Posterior vena cava (tissue), 2 donors: ENCODE measurements at regions of chr20 and their contacts with region 1.

Region 1: GRCh38 chr20:61135968-61136367 is 116.1 kb upstream of the CDH4 start:
- DNase-seq: no peak

Region 2: GRCh38 chr20:60210779-60211617 is 925.0 kb before region 1 on chr20:
- intact Hi-C with region 1: loop called in 1 of 2 experiments (anchors 10 kb)
- DNase-seq: peak; percentile 90

Region 3: GRCh38 chr20:60845146-60845545 is 290.8 kb before region 1 on chr20:
- intact Hi-C with region 1: loop called in 1 of 2 experiments (anchors 10 kb)
- DNase-seq: no peak

Region 4: DNA sequence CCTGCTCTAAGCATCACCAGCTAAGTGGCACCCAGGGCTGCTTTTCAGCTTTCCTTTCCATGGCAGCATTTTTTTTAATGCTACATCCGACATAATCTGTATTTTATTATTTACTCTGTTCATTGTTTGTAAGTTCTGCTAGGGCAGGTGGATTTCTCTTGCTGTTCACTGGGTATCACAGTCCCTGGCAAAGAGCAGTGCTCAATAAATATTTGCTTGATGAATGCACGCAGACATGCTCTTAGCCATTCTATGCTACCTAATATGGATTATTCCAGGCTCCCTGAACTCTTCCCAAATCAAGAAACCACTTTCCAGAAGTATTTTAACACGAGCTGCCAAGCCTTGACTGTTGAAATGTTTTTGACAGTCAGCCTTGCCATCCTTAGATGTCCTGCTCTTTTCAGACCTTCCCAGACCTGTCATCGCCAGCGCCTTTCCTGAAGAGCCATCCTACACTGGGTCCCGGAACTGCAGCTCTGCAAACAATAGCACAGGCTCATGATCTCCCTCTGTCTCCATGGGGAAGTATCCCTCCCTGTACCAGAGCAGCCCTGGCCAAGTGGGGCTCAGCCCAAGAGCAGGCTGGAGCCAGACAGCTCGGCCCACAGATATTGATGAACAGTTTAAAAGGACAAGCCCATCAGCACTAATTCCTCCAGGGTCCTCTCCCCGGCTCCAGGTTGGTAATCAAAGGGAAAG is 20.5 kb before region 1 on chr20:
- intact Hi-C with region 1: loop called in 1 of 2 experiments (anchors 1 kb)
- DNase-seq: no peak

Region 5: DNA sequence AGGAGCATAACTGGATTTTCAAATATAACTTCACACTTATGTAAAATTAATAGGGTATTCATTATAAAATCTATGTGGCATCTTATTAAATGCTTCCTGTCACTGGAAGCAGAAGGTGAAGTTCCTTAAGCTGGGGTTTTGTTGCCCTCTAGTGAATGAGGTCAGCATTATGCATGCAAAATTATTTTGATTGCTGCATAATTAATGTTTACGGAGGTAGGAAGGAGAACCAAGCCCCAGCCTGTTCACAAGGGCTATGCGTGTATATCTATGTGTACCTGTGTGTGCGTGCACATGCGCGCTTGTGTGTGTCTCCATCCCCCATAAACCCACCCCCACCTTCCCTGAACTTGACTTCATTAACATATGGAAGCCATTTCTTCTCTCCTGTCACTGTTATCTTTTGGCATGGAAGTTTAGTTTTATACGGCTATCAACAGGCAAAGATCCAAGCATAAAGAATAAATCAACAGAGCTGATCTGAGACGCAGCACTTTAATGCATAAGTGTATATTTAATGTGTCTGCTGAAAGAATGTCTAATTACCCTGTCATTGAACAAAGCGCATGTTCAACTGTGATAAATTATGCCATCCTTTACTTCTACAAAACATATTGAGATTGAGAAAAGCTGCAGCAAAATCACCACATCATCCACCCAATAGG is 25.9 kb after region 1 on chr20:
- intact Hi-C with region 1: no loop called
- DNase-seq: no peak